ENCODE measurements at regions of chr19 and their contacts with region 1.

Region 1: GRCh38 chr19:33388725-33389420 is 15.4 kb downstream of the CEBPG start:
- DNase-seq: no peak
- H3K4me3 ChIP-seq: no peak overlapping the region
- H3K27ac ChIP-seq: peak overlapping the region; percentile 50 to 60
- H3K4me1 ChIP-seq: peaks cover 22% of the 10 kb centered on the region
- H3K27me3 ChIP-seq: no peaks in the 10 kb centered on the region
- CTCF ChIP-seq: no peak
- POLR2A ChIP-seq: no peak

Region 2: DNA sequence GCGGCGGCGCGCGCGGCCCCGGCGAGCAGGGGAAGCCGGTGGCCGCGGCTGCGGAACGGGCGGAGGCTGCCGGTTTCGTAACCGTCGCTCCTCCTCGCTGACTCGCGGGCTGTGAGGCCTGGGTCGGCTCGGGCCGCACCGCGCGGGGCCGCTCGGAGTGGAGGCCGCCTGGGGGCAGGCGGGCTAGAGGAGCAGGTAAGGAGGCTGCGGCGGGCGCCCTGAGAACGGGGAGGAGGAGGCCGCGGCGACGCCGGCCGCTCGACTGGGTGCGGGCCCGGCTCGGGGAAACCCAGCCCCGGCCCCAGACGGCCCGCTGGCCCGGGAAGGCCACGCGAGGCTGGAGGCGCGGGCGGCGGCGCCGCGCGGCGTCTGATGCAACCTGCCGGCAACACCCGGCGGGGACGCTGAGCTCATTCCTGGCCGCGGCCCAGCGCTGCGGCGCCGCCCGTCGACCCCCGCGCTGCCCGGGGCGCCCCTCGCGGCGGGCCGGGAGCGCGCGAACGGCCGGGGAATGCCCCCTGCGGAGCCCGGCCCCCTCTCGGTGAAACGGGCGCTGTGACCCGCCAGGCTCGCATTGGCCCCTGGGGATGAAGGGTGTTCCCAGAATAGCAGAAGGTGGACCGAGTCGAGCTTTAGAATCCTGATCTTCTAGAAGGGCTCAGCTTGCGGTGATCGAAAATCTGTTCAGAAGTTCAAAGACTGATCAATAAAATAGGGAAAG is 15.0 kb before region 1 on chr19 and contains the start of gene CEBPG:
- intact Hi-C with region 1: loop called (anchors 2 kb)
- DNase-seq: no peak
- H3K4me3 ChIP-seq: peak within 1 kb of the TSS; percentile 94 to 95
- H3K27ac ChIP-seq: peak within 1 kb of the TSS; percentile 89 to 94
- H3K4me1 ChIP-seq: no peaks in the 10 kb centered on the region
- H3K27me3 ChIP-seq: no peaks in the 10 kb centered on the region
- CTCF ChIP-seq: peak in 1 of 4 experiments; percentile 45
- POLR2A ChIP-seq: peak; percentile 90
- total RNA-seq, gene CEBPG: 15.7 to 19.7 TPM

Region 3: DNA sequence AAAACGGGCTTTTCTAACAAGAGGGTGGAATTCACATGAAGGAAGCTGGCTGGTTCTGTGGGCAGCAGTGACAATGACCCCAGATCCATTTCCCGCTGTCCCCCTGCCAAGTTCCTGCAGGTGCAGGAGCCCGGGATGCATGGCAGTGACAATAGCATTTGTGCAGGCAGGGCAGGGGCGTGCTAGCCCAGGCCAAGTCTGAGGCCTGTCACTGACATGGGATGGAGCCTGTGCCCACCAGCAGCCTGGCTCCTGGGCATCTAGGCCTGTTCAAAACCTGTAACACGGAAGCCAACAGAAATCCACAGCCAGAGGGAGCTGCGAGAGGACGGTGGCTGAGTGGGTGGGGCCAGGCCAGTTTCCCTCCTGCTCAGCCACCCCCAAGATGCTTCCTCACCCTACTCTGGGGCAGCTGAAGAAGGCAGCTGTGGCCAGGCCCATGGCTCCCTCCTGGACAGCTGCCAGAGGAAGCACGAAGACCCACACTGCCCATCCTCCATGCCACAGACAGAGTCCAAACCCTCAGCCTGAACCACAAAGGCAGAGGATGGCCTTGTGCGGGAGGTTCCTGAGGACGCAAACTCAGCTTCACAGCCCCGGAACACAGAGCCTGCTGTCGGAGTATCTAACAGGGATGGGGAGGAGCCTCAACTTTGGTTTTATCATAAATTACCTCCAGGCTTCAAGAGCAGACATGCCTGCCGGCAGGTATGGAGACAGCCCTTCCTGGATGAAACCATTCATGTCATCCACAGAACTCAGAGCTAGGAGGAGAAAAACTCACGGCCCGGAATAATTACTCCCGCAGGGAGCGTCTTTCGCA is 58.7 kb after region 1 on chr19:
- intact Hi-C with region 1: no loop called
- DNase-seq: no peak
- H3K4me3 ChIP-seq: no peak overlapping the region
- H3K27ac ChIP-seq: no peak overlapping the region
- H3K4me1 ChIP-seq: no peaks in the 10 kb centered on the region
- H3K27me3 ChIP-seq: no peaks in the 10 kb centered on the region
- CTCF ChIP-seq: no peak
- POLR2A ChIP-seq: no peak

Measured in prostate gland (tissue), 2 donors.